Activated CD4-positive, alpha-beta T cell treated with anti-CD3 and anti-CD28 coated beads for 36 hours (primary cell): ENCODE measurements at regions of chr10 and their contacts with region 1.

Region 1: GRCh38 chr10:71569775-71570588 is 149.6 kb downstream of the C10orf105 start:
- DNase-seq: peak; percentile 89
- ATAC-seq: peak; percentile 69
- H3K4me3 Mint-ChIP-seq: no peak overlapping the region
- H3K27ac Mint-ChIP-seq: no peak overlapping the region
- H3K4me1 Mint-ChIP-seq: no peaks in the 10 kb centered on the region
- H3K27me3 Mint-ChIP-seq: no peaks in the 10 kb centered on the region

Region 2: DNA sequence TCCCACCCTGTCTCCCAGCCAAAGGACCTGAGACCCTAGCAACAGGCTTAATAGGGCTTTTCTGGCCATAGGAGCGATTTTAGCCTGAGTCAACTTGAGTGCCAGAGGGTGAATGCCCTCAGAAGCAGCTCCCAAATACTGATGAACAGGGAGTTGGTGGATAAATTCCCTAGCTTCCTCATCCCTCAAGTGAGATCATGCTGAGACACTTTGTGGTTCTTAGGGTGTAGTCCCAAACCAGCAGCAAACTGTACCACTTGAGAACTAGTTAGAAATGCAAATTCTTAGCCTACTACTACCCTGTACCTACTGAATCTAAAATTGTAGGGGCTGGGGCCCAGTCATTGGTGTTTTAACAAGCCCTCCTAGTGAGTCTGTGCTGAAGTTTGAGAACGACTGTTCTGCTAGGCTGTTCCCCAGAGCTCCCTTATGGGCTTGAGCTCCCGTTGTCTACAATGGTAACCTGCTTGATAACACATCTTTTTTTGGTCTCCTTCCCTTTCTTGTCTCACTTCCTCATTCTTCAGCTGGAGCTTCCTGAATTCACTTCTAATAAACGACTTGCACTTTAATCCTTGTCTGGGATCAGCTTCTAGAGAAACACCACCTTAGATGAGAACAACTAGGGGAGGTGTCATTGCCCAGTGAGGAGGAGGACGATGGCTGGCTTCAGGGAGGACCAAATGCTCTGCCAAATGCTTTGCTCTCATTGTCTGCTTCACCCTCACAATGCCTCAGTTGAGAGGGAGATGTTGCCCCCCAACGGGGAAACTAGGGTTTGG is 191.5 kb before region 1 on chr10:
- CTCF ChIA-PET with region 1: interaction called, 10 read pairs
- POLR2A ChIA-PET with region 1: no interaction called
- intact Hi-C with region 1: no loop called
- DNase-seq: no peak
- ATAC-seq: no peak
- H3K4me3 Mint-ChIP-seq: no peak overlapping the region
- H3K27ac Mint-ChIP-seq: no peak overlapping the region
- H3K4me1 Mint-ChIP-seq: peaks cover 4% of the 10 kb centered on the region
- H3K27me3 Mint-ChIP-seq: no peaks in the 10 kb centered on the region

Region 3: GRCh38 chr10:71396084-71396720 is 173.8 kb before region 1 on chr10:
- CTCF ChIA-PET with region 1: interaction called, 37 read pairs
- POLR2A ChIA-PET with region 1: no interaction called
- intact Hi-C with region 1: loop called (anchors 1 to 5 kb)
- DNase-seq: peak; percentile 67
- ATAC-seq: peak; percentile 88
- H3K4me3 Mint-ChIP-seq: no peak overlapping the region
- H3K27ac Mint-ChIP-seq: no peak overlapping the region
- H3K4me1 Mint-ChIP-seq: peaks cover 8% of the 10 kb centered on the region
- H3K27me3 Mint-ChIP-seq: peaks cover 51% of the 10 kb centered on the region

Region 4: GRCh38 chr10:71494980-71495381 is 75.0 kb before region 1 on chr10:
- CTCF ChIA-PET with region 1: interaction called, 10 read pairs
- POLR2A ChIA-PET with region 1: no interaction called
- intact Hi-C with region 1: no loop called
- DNase-seq: no peak
- ATAC-seq: no peak
- H3K4me3 Mint-ChIP-seq: no peak overlapping the region
- H3K27ac Mint-ChIP-seq: no peak overlapping the region
- H3K4me1 Mint-ChIP-seq: peaks cover 6% of the 10 kb centered on the region
- H3K27me3 Mint-ChIP-seq: peaks cover 9% of the 10 kb centered on the region

Region 5: GRCh38 chr10:71608819-71609768 is 39.1 kb after region 1 on chr10:
- CTCF ChIA-PET with region 1: interaction called, 17 read pairs
- POLR2A ChIA-PET with region 1: no interaction called
- intact Hi-C with region 1: no loop called
- DNase-seq: peak; percentile 86
- ATAC-seq: peak; percentile 71
- H3K4me3 Mint-ChIP-seq: no peak overlapping the region
- H3K27ac Mint-ChIP-seq: no peak overlapping the region
- H3K4me1 Mint-ChIP-seq: peaks cover 2% of the 10 kb centered on the region
- H3K27me3 Mint-ChIP-seq: no peaks in the 10 kb centered on the region